ENCODE measurements at regions of chr10 and their contacts with region 1.

Region 1: DNA sequence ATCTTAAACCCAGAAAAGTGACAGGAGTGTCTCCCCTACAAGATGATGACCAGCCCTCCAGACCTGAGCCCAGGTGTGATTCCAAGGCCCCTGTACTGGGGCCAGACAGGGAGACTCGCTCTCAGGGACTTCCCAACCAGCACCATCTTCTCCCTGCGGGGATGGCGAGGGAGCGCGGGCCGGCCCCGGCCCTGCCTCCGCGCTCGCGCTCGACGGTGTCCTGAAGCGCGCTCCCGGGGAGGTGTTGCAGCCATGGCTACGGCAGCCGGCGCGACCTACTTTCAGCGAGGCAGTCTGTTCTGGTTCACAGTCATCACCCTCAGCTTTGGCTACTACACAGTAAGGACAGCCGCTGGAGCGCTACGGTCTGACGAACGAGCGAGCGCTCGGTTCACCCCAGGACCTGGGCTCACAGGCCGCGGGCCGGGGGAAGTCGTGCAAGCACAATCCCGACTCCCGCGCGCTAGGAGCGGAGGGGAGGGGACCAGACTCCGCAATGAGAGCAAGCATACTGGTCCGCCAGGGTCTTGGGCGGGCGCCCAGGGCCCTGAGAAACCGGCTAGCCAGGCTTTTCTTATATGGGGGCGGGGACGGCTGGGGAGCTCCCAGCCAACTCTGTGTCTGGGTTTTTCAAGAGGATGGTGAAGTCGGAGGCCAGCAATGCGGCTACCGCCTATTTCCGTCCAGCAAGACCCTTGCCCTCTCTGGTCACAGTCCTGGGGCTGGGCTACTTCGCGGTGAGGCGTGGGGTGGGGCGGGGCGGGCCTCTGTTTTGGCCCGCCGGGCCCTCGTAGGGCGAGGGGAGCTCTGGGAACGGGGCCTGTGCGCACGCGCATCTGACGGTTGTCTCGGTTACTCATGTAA is at the start of gene TMEM254:
- DNase-seq: peak; percentile 92 to 96 (median 93)
- H3K4me3 ChIP-seq: peak within 1 kb of the TSS; percentile 97
- H3K27ac ChIP-seq: peak within 1 kb of the TSS; percentile 91 to 95
- H3K4me1 ChIP-seq: no peaks in the 10 kb centered on the region
- H3K27me3 ChIP-seq: no peaks in the 10 kb centered on the region
- CTCF ChIP-seq: no peak
- EP300 ChIP-seq: no peak
- POLR2A ChIP-seq: no peak
- total RNA-seq, gene TMEM254: 9.3 to 20.4 (median 12.0) TPM

Region 2: DNA sequence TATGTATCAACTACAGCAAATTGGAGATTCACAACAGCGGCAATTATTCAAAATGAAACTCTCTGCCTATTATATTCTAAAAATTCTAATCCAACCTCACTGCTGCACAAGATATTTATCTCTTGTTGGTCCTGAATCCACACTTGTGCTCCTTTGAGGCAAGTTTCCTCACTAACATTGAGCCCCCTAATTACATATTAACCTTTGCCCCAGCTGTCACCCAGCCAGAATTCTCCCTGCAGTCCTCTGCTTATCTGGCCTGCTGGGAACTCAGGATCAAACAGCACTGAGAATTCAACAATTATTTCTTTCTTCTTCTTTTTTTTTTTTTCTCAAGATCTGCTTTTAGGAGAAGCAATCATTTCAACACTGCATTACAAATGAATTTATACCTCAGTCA is 32.3 kb after region 1 on chr10:
- intact Hi-C with region 1: loop called in 1 of 4 experiments (anchors 2 kb)
- DNase-seq: no peak
- H3K4me3 ChIP-seq: no peak overlapping the region
- H3K27ac ChIP-seq: peak overlapping the region in 1 of 2 donors; percentile 28
- H3K4me1 ChIP-seq: peaks cover 3% of the 10 kb centered on the region
- H3K27me3 ChIP-seq: no peaks in the 10 kb centered on the region
- CTCF ChIP-seq: no peak
- EP300 ChIP-seq: no peak
- POLR2A ChIP-seq: no peak

Region 3: GRCh38 chr10:80136081-80136571 is 57.4 kb after region 1 on chr10:
- intact Hi-C with region 1: loop called in 1 of 4 experiments (anchors 10 kb)
- DNase-seq: peak; percentile 69 to 82 (median 73)
- H3K4me3 ChIP-seq: no peak overlapping the region
- H3K27ac ChIP-seq: no peak overlapping the region
- H3K4me1 ChIP-seq: no peaks in the 10 kb centered on the region
- H3K27me3 ChIP-seq: no peaks in the 10 kb centered on the region
- CTCF ChIP-seq: no peak
- EP300 ChIP-seq: no peak
- POLR2A ChIP-seq: no peak